Activated CD8-positive, alpha-beta memory T cell treated with anti-CD3 and anti-CD28 coated beads, Interleukin-2, amount 10 ng/mL, durations not matched to agents 7 days and 5 days (primary cell): ENCODE measurements at regions of chr4 and their contacts with region 1.

Region 1: GRCh38 chr4:183261953-183262775 is 57.9 kb downstream of the CLDN22 start:
- DNase-seq: peak; percentile 80
- ATAC-seq: peak; percentile 91
- H3K4me3 Mint-ChIP-seq: no peak overlapping the region
- H3K27ac Mint-ChIP-seq: no peak overlapping the region
- H3K4me1 Mint-ChIP-seq: peaks cover 5% of the 10 kb centered on the region
- H3K27me3 Mint-ChIP-seq: peaks cover 27% of the 10 kb centered on the region

Region 2: GRCh38 chr4:182925298-182925738 is 336.8 kb before region 1 on chr4:
- CTCF ChIA-PET with region 1: interaction called, 14 read pairs
- DNase-seq: peak; percentile 75
- ATAC-seq: peak; percentile 95
- H3K4me3 Mint-ChIP-seq: no peak overlapping the region
- H3K27ac Mint-ChIP-seq: no peak overlapping the region
- H3K4me1 Mint-ChIP-seq: no peaks in the 10 kb centered on the region
- H3K27me3 Mint-ChIP-seq: peaks cover 7% of the 10 kb centered on the region

Region 3: GRCh38 chr4:182938205-182938645 is 323.9 kb before region 1 on chr4:
- CTCF ChIA-PET with region 1: interaction called, 46 read pairs
- DNase-seq: peak; percentile 74
- ATAC-seq: peak; percentile 97
- H3K4me3 Mint-ChIP-seq: no peak overlapping the region
- H3K27ac Mint-ChIP-seq: no peak overlapping the region
- H3K4me1 Mint-ChIP-seq: peaks cover 3% of the 10 kb centered on the region
- H3K27me3 Mint-ChIP-seq: peaks cover 24% of the 10 kb centered on the region

Region 4: GRCh38 chr4:183074296-183074990 is 187.7 kb before region 1 on chr4:
- CTCF ChIA-PET with region 1: interaction called, 60 read pairs
- DNase-seq: no peak
- ATAC-seq: no peak
- H3K4me3 Mint-ChIP-seq: no peak overlapping the region
- H3K27ac Mint-ChIP-seq: no peak overlapping the region
- H3K4me1 Mint-ChIP-seq: no peaks in the 10 kb centered on the region
- H3K27me3 Mint-ChIP-seq: peaks cover 27% of the 10 kb centered on the region

Region 5: DNA sequence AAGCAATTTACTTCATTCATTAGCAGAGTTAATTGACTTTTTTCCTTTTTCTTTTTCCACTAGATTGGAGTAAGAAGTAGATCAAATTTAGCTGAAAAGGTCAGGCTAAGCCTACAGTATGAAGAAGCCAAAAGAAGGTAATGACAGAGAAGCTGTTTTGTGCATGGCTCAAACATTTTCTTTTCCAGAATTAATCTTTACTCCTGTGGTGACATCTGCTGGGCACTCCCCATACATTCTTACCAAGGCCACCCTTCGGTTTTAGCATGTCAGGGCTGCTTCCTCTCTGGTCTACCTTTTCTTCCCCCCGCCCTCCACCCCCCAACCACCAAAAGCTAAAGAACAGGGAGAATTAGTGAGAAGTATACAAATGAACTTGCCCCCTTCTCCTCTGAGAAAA is 12.3 kb before region 1 on chr4:
- CTCF ChIA-PET with region 1: interaction called, 26 read pairs
- DNase-seq: no peak
- ATAC-seq: no peak
- H3K4me3 Mint-ChIP-seq: no peak overlapping the region
- H3K27ac Mint-ChIP-seq: no peak overlapping the region
- H3K4me1 Mint-ChIP-seq: no peaks in the 10 kb centered on the region
- H3K27me3 Mint-ChIP-seq: peaks cover 30% of the 10 kb centered on the region

Region 6: GRCh38 chr4:183272384-183272783 is 10.2 kb after region 1 on chr4:
- CTCF ChIA-PET with region 1: interaction called, 17 read pairs
- DNase-seq: no peak
- ATAC-seq: no peak
- H3K4me3 Mint-ChIP-seq: no peak overlapping the region
- H3K27ac Mint-ChIP-seq: no peak overlapping the region
- H3K4me1 Mint-ChIP-seq: no peaks in the 10 kb centered on the region
- H3K27me3 Mint-ChIP-seq: peaks cover 4% of the 10 kb centered on the region